ENCODE measurements at regions of chr19 and their contacts with region 1.

Region 1: DNA sequence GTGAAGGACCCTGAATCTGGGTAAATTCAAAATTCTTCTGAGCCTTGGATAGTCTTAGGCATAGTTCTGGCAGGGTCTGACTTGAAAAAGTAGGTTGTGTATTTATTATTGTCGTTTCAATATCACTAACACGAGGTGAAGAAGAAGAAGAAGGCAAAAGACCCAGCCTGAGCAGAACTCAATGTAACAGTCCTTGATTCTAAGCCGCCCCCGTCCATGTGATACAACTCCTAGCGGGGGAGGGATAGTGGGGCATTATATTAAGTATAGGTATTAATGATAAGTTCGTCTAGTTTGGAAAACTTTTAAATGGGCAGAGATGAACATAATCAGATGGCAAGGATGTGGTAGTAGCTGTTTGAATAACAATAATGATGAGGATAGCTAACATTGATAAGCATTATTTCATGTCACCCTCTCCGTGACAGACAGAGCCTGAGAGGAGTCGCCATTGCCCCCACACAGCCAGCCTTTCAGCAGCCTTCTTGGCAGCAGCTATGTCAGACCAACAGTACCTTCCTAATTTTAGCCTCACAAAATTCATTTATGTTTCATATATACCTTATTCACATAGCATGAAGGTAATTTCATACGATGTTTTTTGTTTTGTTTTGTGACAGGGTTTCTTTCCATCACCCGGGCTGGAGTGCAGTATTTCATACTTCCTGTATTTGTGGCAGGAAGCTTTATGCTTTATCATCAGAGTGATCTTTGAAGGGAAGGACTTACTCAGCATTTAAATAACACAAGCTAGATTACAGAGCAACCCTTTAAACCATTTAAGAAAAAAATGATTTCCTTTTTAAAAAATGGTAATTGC is 64.4 kb upstream of the NPAS1 start:
- DNase-seq: no peak
- H3K4me3 ChIP-seq: no peak overlapping the region
- H3K27ac ChIP-seq: peak overlapping the region; percentile 72
- H3K27me3 ChIP-seq: no peaks in the 10 kb centered on the region
- CTCF ChIP-seq: no peak

Region 2: GRCh38 chr19:46850228-46851203 is 104.7 kb before region 1 on chr19 and contains the start of gene AP2S1:
- in situ Hi-C with region 1: loop called (anchors 25 kb)
- DNase-seq: peak; percentile 99
- H3K4me3 ChIP-seq: peak within 1 kb of the TSS; percentile 96
- H3K27ac ChIP-seq: peak within 1 kb of the TSS; percentile 75
- H3K27me3 ChIP-seq: no peaks in the 10 kb centered on the region
- CTCF ChIP-seq: no peak

Measured in brain microvascular endothelial cell (primary cell).